AG04450 (cell line): ENCODE measurements at regions of chr17 and their contacts with region 1.

Region 1: DNA sequence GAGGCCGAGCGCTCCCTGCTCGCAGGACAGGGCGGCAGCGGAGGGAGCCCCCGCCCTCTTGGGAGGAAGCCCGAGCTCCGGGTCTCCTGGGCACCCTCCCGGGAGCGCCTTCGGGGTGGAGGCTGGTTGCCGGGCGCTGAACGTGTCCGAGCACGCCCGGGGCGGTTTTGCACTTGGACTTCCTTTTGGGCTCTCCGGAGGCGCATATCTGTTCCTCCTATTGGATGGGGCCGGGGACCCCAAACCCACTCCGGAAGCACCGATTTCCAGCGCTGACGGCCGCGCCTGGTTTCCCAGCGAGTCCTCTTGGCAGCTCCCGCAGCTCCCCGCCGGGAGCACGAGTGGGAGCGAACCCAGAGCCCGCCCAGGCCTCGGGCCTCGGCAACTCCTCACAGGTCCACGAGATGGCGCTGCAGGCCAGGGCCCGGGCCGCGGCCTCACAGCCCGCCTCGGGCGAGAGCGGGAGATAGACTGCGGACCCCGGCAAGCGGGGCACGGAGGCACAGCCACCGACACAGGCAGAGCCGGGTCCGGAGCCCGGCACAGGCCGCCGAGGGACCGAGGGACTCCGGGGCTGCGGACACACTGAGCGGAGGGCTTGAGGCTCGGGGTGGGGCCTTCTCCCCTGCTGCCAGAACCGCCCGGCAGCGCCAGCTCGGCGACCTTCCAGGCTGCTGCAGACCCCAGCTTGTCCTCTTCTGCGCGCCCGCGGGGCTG is 12.7 kb downstream of the TBX2 start:
- DNase-seq: no peak
- H3K4me3 ChIP-seq: peak overlapping the region; percentile 68
- H3K27ac ChIP-seq: peak overlapping the region; percentile 94
- H3K27me3 ChIP-seq: no peaks in the 10 kb centered on the region
- CTCF ChIP-seq: peak; percentile 94

Region 2: DNA sequence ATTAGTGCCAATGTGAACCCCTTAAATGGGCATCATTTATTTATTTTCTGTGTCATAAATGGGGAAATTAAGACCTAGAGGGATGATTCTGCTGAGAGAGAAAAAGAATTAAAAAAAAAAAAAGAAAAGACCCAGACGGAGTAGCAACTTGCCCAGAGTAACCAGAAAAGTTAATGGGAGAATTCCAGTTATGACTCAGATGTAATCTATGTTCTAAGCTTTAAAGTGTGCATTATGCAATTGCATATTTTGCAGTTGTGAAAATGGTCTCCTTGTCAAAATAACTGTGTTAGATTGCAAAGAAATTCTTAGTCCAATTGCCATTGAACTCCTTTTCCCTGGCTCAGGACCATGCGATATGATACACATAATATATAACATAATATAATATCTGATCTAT is 51.2 kb before region 1 on chr17:
- CTCF ChIA-PET with region 1: no interaction called
- POLR2A ChIA-PET with region 1: no interaction called
- DNase-seq: peak; percentile 50
- H3K4me3 ChIP-seq: no peak overlapping the region
- H3K27ac ChIP-seq: no peak overlapping the region
- H3K27me3 ChIP-seq: no peaks in the 10 kb centered on the region
- CTCF ChIP-seq: no peak

Region 3: DNA sequence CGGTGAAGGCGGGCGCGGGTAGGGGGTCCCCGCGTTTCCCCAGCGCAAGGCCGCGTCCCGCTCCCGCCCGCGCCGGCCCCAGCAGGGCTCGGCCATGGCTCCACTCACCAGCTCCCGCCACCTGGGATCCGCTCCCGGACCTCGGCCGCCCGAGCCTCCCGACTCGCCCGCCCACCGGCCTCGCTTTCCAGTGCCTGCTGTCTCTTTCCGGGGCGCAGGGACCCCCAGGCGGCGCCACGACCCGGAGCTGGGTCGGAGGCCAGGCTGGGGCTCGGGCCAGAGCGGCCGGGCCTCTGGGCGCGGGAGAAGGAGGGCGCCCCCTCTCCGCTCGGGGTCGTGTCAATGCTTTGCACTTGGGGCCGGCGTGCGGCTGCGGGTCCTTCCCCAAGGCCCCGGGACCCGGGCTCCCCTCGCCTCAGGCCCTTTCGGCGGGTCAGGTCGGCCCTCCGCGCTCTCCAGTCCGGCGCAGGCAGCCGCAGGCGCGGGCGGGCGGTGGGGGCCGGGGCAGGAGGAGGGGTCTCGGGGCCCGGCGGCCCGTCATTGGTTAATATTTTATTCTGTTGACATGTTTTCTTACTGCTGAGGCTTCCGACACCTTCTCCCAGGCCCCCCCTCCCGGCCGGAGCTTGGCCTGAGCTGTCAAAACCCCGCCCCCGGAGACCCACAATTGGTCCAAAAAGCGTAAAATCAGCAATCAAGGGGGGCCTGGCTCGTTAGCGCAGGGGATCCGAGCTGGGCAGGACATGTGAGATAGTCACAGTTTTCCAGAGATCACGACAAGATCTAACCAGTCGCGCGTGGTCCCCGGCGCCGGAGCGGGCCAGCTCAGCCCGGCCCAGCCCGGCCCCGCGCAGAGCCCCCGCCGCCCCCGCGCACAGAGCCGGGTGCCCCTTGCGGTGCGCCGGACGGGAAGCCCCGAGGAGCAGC is 12.9 kb before region 1 on chr17 and contains the start of gene TBX2:
- CTCF ChIA-PET with region 1: interaction called, 4 read pairs
- POLR2A ChIA-PET with region 1: interaction called, 27 read pairs
- DNase-seq: peak; percentile 93
- H3K4me3 ChIP-seq: peak within 1 kb of the TSS; percentile 98
- H3K27ac ChIP-seq: peak within 1 kb of the TSS; percentile 90
- H3K27me3 ChIP-seq: no peaks in the 10 kb centered on the region
- CTCF ChIP-seq: no peak
- polyA plus RNA-seq, gene TBX2: 18.3 and 22.0 TPM in 2 replicates

Region 4: DNA sequence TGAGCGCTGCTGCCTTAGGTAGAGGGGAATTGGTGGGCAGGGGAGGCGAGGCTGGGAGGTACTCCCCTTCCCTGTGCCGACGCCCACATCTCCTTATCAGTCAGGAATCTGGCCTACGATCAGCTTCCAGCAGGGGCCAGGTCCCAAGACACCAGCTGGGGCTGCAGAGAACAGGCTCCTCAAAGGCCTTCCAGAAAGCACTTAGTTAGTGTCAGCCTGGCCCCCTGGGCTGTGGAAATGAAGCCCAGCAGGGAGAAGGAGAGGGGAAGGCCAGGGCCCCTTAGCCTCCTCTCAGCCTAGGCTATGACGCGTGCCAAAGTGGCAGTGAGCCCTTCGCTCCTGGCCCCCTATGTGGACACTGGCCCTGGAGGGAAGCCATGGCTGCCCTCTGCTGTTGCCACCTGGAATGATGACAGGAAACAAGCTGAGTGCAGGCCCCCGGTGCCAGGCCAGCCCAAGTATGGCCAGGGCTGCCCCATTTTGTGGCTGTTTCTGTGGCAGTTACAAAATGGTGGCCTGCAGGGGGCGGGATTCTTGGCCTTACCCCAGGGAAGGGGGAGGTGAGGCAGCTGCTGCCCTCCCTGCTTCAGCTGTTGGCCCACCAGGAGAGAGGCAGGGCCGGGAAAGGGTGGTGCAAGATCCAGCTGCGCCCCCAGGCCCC is 51.1 kb after region 1 on chr17:
- CTCF ChIA-PET with region 1: no interaction called
- POLR2A ChIA-PET with region 1: no interaction called
- DNase-seq: no peak
- H3K4me3 ChIP-seq: no peak overlapping the region
- H3K27ac ChIP-seq: no peak overlapping the region
- H3K27me3 ChIP-seq: peaks cover 40% of the 10 kb centered on the region
- CTCF ChIP-seq: peak; percentile 25; the same call in 1 of the 2 replicates

Region 5: GRCh38 chr17:61551255-61551742 is 139.0 kb after region 1 on chr17:
- CTCF ChIA-PET with region 1: interaction called, 50 read pairs
- POLR2A ChIA-PET with region 1: interaction called, 3 read pairs
- DNase-seq: no peak
- H3K4me3 ChIP-seq: no peak overlapping the region
- H3K27ac ChIP-seq: no peak overlapping the region
- H3K27me3 ChIP-seq: peaks cover 6% of the 10 kb centered on the region
- CTCF ChIP-seq: peak; percentile 78

Region 6: GRCh38 chr17:61574542-61575174 is 162.4 kb after region 1 on chr17:
- CTCF ChIA-PET with region 1: interaction called, 39 read pairs
- POLR2A ChIA-PET with region 1: interaction called, 8 read pairs
- DNase-seq: no peak
- H3K4me3 ChIP-seq: no peak overlapping the region
- H3K27ac ChIP-seq: no peak overlapping the region
- H3K27me3 ChIP-seq: no peaks in the 10 kb centered on the region
- CTCF ChIP-seq: peak; percentile 54

Region 7: DNA sequence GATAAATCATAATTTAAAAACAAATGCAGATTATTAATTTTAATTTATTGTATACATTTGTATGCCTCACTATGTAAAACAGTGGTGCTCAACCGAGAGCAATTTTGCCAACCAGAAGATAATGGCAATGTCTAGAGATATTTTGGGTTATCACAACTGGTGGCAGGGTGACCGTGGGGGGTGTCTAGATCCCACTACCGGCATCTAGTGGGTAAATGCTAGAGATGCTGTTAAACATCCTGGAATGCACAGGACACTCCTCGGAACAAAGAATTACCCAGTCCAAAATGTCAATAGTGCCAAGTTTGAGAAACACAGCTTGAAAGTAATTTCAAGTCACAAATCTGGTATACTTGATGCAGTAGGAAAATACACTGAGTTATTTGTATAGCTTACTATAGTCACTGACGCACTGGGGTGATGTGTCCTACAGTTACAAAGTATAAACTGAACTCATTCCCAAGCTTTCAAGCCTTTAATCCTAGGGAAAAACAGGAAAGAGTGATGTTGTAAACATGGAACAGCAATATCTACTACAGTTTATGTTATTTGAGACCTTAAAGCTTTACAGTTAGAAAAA is 317.5 kb after region 1 on chr17:
- CTCF ChIA-PET with region 1: no interaction called
- POLR2A ChIA-PET with region 1: no interaction called
- DNase-seq: no peak
- H3K4me3 ChIP-seq: no peak overlapping the region
- H3K27ac ChIP-seq: no peak overlapping the region
- H3K27me3 ChIP-seq: no peaks in the 10 kb centered on the region
- CTCF ChIP-seq: peak; percentile 27

Region 8: DNA sequence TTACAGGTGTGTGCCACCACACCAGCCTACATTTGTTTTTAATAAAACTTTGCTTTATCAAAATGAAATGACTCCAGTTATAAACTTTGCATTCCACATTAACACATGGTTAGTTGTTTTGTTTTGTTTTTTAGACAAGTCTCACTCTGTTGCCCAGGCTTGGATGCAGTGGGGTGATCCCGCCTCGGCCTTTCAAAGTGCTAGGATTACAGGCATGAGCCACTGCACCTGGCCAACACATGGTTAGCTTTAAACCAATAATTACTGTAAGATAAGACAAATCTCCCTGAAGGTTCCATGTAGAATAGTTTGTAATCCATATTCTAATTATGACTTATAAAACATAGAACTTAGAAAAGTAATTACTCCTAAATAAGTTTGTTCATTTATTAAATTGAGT is 742.6 kb after region 1 on chr17:
- CTCF ChIA-PET with region 1: no interaction called
- POLR2A ChIA-PET with region 1: no interaction called
- DNase-seq: no peak
- H3K4me3 ChIP-seq: no peak overlapping the region
- H3K27ac ChIP-seq: no peak overlapping the region
- H3K27me3 ChIP-seq: no peaks in the 10 kb centered on the region
- CTCF ChIP-seq: no peak